Gastrocnemius medialis (tissue), 4 donors: ENCODE measurements at regions of chr7 and their contacts with region 1.

Region 1: GRCh38 chr7:149742075-149742701 is 31.2 kb downstream of the ZNF467 start:
- DNase-seq: peak; percentile 40 to 49
- ATAC-seq: peak; percentile 86 to 92
- H3K4me3 ChIP-seq: peak overlapping the region; percentile 44 to 56 (median 52)
- H3K27ac ChIP-seq: peak overlapping the region; percentile 20 to 61 (median 46)
- H3K4me1 ChIP-seq: peaks cover 10 to 13% of the 10 kb centered on the region in 2 donors
- H3K27me3 ChIP-seq: no peaks in the 10 kb centered on the region
- CTCF ChIP-seq: peak; percentile 77 to 89 (median 85)
- POLR2A ChIP-seq: no peak

Region 2: GRCh38 chr7:149655784-149656183 is 86.4 kb before region 1 on chr7:
- in situ Hi-C with region 1: loop called in 3 of 4 experiments (anchors 5 to 10 kb)
- intact Hi-C with region 1: no loop called
- DNase-seq: no peak
- ATAC-seq: no peak
- H3K4me3 ChIP-seq: no peak overlapping the region
- H3K27ac ChIP-seq: no peak overlapping the region
- H3K4me1 ChIP-seq: no peaks in the 10 kb centered on the region
- H3K27me3 ChIP-seq: no peaks in the 10 kb centered on the region
- CTCF ChIP-seq: no peak
- POLR2A ChIP-seq: no peak

Region 3: GRCh38 chr7:149662591-149663095 is 79.5 kb before region 1 on chr7:
- in situ Hi-C with region 1: loop called (anchors 5 to 10 kb)
- intact Hi-C with region 1: loop called (anchors 1 kb)
- DNase-seq: peak; percentile 45 to 81
- ATAC-seq: peak; percentile 95 to 97
- H3K4me3 ChIP-seq: no peak overlapping the region
- H3K27ac ChIP-seq: peak overlapping the region; percentile 53 to 71 (median 68)
- H3K4me1 ChIP-seq: peaks cover 6 to 7% of the 10 kb centered on the region in 2 donors
- H3K27me3 ChIP-seq: no peaks in the 10 kb centered on the region
- CTCF ChIP-seq: peak; percentile 47 to 78 (median 68)
- POLR2A ChIP-seq: no peak

Region 4: DNA sequence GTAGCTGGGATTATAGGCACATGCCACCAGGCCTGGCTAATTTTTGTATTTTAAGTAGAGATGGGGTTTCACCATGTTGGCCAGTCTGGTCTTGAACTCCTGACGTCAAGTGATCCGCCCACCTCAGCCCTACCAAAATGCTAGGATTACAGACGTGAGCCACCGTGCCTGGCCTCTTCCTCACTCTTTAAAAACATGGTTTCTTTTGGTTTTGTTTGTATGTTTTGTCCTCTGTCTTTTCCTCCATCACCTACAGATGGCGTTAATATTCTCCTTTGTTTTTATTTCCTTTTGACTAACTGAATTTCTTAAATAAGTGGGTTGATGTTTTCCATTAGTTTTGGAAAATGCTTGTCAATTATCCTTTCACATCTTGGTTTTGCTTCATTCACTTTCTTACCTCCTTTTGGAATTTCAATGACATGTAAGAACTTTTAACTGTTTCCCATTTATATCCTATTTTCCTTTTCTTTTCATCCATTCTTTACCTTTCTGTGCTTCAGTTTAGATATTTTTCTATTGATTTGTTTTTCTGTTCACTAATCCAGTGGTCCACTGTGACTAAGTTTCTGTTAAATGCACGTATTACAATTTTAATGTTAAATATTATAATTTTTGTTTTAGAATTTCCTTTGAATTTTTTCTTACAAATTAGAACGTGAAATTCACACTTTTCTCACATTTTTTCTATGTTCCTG is 72.9 kb before region 1 on chr7:
- in situ Hi-C with region 1: loop called in 3 of 4 experiments (anchors 5 to 10 kb)
- intact Hi-C with region 1: no loop called
- DNase-seq: no peak
- ATAC-seq: no peak
- H3K4me3 ChIP-seq: no peak overlapping the region
- H3K27ac ChIP-seq: no peak overlapping the region
- H3K4me1 ChIP-seq: peaks cover 6% of the 10 kb centered on the region in 2 donors
- H3K27me3 ChIP-seq: no peaks in the 10 kb centered on the region
- CTCF ChIP-seq: no peak
- POLR2A ChIP-seq: no peak